Caco-2 (cell line): ENCODE measurements at regions of chr17 and their contacts with region 1.

Region 1: DNA sequence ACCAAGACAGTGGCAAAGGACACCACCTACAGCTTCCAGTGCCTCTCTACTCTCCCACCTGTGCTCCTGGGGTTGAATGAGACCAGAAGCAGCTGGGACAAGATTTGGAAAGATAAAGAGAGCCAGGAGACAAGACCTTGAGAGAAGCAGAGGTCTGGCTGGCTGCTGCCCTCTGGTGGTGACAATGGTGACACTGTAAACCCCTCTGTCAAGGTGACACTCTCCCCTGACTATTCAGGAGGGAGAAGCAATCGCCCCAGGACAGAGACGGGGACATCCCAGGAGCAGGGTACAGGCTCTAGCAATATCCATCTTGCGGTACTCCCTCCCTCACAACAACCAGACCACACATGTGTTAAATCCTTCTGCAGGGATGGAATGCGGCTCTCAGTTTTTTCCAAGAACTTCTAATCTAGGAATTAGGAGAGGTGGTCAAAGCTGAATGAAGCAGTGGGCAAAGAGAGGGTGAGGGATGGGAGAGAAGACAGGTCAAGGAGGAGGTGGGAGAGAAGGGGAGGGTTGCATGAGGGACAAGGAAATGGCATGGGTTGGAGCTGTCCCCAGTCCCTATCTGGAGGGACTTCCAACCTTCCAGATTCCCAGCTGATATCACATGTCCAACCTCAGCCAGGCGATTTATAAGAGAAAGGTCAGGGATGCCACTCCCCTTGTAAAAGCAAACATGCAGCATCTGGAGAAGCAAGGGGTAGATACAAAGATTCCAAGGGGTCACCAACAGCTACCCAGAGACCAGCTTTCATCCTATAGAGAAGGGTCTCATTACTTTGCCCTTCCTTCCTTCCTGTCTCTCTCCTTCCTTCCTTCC is 2.9 kb downstream of the PHOSPHO1 start:
- DNase-seq: peak; percentile 93 to 94
- H3K4me3 ChIP-seq: no peak overlapping the region
- H3K4me3 Mint-ChIP-seq: no peak overlapping the region
- H3K27ac Mint-ChIP-seq: no peak overlapping the region
- H3K4me1 ChIP-seq: peaks cover 32% of the 10 kb centered on the region
- H3K4me1 Mint-ChIP-seq: peaks cover 23% of the 10 kb centered on the region
- H3K27me3 ChIP-seq: peaks cover 7% of the 10 kb centered on the region
- H3K27me3 Mint-ChIP-seq: peaks cover 21% of the 10 kb centered on the region
- CTCF ChIP-seq: peak; percentile 99

Region 2: GRCh38 chr17:48690655-48691054 is 537.0 kb before region 1 on chr17:
- CTCF ChIA-PET with region 1: no interaction called
- POLR2A ChIA-PET with region 1: no interaction called
- intact Hi-C with region 1: no loop called
- DNase-seq: no peak
- H3K4me3 ChIP-seq: no peak overlapping the region
- H3K4me3 Mint-ChIP-seq: no peak overlapping the region
- H3K27ac Mint-ChIP-seq: no peak overlapping the region
- H3K4me1 ChIP-seq: no peaks in the 10 kb centered on the region
- H3K4me1 Mint-ChIP-seq: no peaks in the 10 kb centered on the region
- H3K27me3 ChIP-seq: peaks cover 2% of the 10 kb centered on the region; the same call in 1 of the 2 replicates
- H3K27me3 Mint-ChIP-seq: peaks cover 4% of the 10 kb centered on the region
- CTCF ChIP-seq: no peak

Region 3: DNA sequence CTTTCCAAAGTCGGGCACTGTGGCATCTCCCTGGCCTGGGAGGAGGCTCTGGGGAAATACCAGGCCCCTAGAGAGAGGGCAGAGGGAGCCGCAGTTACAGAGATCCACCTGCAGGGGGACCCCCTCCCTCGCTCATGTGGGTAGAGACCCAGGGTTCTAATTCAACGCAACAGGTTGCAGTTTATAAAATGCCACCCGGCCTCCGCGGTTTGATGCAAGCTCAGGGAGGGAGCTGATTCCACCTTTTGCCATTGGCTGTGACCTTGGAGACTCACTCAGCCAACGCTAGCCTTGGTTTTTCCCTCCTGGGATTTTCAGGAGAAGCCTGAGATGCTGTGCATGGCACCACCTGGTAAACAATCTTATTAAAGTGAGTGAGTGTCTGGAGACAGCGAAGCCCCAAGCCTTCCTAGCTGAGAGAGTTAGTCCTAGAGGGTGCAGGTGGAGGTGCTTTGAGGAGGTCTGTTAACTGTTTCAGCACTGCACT is 422.7 kb before region 1 on chr17:
- CTCF ChIA-PET with region 1: no interaction called
- POLR2A ChIA-PET with region 1: no interaction called
- intact Hi-C with region 1: loop called (anchors 1 kb)
- DNase-seq: peak; percentile 86 to 95
- H3K4me3 ChIP-seq: no peak overlapping the region
- H3K4me3 Mint-ChIP-seq: no peak overlapping the region
- H3K27ac Mint-ChIP-seq: no peak overlapping the region
- H3K4me1 ChIP-seq: peaks cover 15% of the 10 kb centered on the region
- H3K4me1 Mint-ChIP-seq: peaks cover 17% of the 10 kb centered on the region
- H3K27me3 ChIP-seq: no peaks in the 10 kb centered on the region
- H3K27me3 Mint-ChIP-seq: no peaks in the 10 kb centered on the region
- CTCF ChIP-seq: peak; percentile 100

Region 4: DNA sequence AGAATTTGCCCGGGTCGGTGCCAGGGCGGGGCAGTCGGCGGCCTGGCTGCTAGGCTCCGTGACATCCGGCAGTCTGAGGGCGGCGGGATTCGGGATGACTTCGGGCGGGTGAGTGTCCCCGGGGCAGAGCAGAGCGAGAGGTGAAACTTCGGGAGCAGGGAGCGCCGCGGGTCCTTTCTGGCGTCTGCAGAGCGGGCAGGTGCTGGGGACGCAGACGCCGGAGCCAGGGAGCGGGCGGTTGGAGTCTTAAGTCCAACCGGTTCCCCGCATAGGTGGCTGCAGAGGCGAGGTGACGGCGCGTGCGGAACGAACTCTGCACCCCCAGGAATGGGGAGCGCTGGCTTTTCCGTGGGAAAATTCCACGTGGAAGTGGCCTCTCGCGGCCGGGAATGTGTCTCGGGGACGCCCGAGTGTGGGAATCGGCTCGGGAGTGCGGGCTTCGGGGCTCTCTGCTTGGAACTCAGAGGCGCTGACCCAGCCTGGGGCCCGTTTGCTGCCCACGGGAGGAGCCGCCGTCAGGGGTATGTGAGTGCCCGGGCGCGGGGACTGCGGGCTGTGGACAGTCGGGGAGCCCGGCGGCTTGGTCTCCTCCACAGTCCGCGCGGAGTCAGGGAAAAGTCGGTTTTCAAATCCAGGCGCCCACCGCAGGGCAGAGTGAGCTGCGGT is 94.8 kb before region 1 on chr17 and contains the start of gene B4GALNT2:
- CTCF ChIA-PET with region 1: no interaction called
- POLR2A ChIA-PET with region 1: no interaction called
- intact Hi-C with region 1: loop called (anchors 5 kb)
- DNase-seq: peak; percentile 79
- H3K4me3 ChIP-seq: peak within 1 kb of the TSS; percentile 58
- H3K4me3 Mint-ChIP-seq: peak within 1 kb of the TSS; percentile 84
- H3K27ac Mint-ChIP-seq: peak within 1 kb of the TSS; percentile 50
- H3K4me1 ChIP-seq: peaks cover 6% of the 10 kb centered on the region; the same call in 1 of the 2 replicates
- H3K4me1 Mint-ChIP-seq: peaks cover 8% of the 10 kb centered on the region
- H3K27me3 ChIP-seq: peaks cover 2% of the 10 kb centered on the region; the same call in 1 of the 2 replicates
- H3K27me3 Mint-ChIP-seq: no peaks in the 10 kb centered on the region
- CTCF ChIP-seq: no peak
- total RNA-seq, gene B4GALNT2: 1.1 and 1.3 TPM in 2 replicates

Region 5: GRCh38 chr17:49197346-49197998 is 30.2 kb before region 1 on chr17:
- CTCF ChIA-PET with region 1: interaction called, 12 read pairs
- POLR2A ChIA-PET with region 1: no interaction called
- intact Hi-C with region 1: loop called (anchors 1 kb)
- DNase-seq: peak in 1 of 2 experiments; percentile 39
- H3K4me3 ChIP-seq: no peak overlapping the region
- H3K4me3 Mint-ChIP-seq: no peak overlapping the region
- H3K27ac Mint-ChIP-seq: no peak overlapping the region
- H3K4me1 ChIP-seq: peaks cover 9% of the 10 kb centered on the region
- H3K4me1 Mint-ChIP-seq: peaks cover 14% of the 10 kb centered on the region
- H3K27me3 ChIP-seq: no peaks in the 10 kb centered on the region; the same call in 1 of the 2 replicates
- H3K27me3 Mint-ChIP-seq: no peaks in the 10 kb centered on the region
- CTCF ChIP-seq: no peak

Region 6: GRCh38 chr17:49266233-49266632 is 38.6 kb after region 1 on chr17:
- CTCF ChIA-PET with region 1: no interaction called
- POLR2A ChIA-PET with region 1: no interaction called
- intact Hi-C with region 1: no loop called
- DNase-seq: no peak
- H3K4me3 ChIP-seq: no peak overlapping the region
- H3K4me3 Mint-ChIP-seq: no peak overlapping the region
- H3K27ac Mint-ChIP-seq: no peak overlapping the region
- H3K4me1 ChIP-seq: no peaks in the 10 kb centered on the region
- H3K4me1 Mint-ChIP-seq: no peaks in the 10 kb centered on the region
- H3K27me3 ChIP-seq: no peaks in the 10 kb centered on the region; the same call in 1 of the 2 replicates
- H3K27me3 Mint-ChIP-seq: no peaks in the 10 kb centered on the region
- CTCF ChIP-seq: no peak

Region 7: DNA sequence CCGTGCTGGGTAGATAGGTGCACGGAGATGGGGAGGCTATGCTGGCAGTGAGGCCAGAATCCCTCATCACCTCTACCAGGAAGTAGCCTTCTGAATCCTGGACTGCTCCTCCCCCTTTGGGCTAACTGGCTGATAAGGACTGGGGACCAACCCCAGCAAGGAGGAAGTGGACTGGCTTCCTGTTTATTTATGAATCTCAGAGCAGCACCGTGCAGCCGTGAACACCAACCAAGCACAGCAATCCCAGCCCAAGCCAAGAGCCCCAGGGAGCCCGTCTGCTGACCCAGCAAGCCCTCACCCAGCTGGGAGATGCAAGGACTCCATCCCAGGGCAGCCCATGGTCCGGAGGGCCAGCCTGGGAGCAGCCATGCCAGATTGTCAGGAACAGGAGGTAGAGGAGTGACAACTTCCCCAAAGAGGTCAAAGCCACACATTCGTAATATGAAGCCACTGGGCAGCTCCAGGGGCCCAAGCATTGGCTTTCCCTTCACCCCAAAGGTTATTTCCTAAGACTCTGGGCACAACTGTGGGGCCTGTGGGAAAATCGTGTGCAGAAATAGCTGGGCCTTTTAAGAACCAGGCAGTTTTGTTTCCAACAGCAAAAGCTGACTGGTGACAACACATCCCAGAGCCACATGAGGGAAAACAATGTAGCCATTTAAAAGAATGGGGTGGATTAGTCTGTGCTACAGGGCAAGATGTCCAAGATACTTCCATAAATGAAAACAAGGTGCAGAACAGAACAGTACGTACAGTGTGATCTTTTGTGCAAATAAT is 163.1 kb after region 1 on chr17:
- CTCF ChIA-PET with region 1: no interaction called
- POLR2A ChIA-PET with region 1: no interaction called
- intact Hi-C with region 1: loop called (anchors 2 kb)
- DNase-seq: no peak
- H3K4me3 ChIP-seq: no peak overlapping the region
- H3K4me3 Mint-ChIP-seq: no peak overlapping the region
- H3K27ac Mint-ChIP-seq: no peak overlapping the region
- H3K4me1 ChIP-seq: peaks cover 9% of the 10 kb centered on the region; the same call in 1 of the 2 replicates
- H3K4me1 Mint-ChIP-seq: no peaks in the 10 kb centered on the region
- H3K27me3 ChIP-seq: no peaks in the 10 kb centered on the region
- H3K27me3 Mint-ChIP-seq: no peaks in the 10 kb centered on the region
- CTCF ChIP-seq: no peak